ENCODE measurements at regions of chr18 and their contacts with region 1.

Region 1: DNA sequence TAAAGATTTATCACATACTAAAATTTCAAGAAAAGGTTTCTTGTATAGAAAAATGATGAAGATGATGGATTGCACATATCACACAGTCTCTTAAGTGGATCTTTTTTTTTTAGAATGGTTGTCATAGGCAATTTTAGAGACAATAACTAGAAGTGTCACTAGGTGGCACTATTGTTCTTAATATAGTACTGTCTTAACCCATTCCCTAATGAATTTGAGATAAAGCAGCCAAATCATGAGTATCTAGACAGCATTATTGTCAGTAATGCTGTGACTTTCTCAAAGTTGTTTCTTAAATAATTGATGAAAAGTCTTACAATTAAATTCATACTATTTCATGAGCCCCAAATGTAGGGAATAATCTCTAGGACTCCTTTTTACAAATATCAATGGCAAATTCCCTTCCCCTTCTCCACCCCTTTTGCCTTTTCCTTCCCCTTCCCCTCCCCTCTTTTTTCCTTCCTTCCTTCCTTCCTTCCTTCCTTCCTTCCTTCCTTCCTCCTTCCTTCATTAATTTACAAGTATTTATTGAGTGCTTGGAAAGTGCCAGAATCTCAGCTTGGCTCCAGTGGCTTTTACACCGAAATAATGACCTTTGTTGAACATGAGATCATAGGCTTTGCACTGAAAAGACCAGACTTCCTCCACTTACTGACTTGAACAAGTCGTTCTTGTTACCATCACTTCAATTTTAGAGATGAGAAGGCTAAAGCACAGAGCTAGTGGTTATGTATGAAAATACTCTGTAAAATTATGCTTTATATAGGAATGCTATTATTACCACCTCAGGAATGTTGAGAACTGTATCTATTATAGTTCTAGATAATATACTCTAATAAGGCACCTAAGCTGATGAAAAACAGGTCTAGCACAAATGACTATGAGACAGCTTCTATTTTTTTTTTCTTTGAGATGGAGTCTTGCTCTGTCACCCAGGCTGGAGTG is 19.8 kb downstream of the MYL12B start:
- DNase-seq: no peak
- ATAC-seq: peak; percentile 91

Region 2: GRCh38 chr18:3451183-3451988 is 169.7 kb after region 1 on chr18:
- intact Hi-C with region 1: loop called (anchors 5 kb)
- DNase-seq: peak; percentile 97
- ATAC-seq: peak; percentile 72

Region 3: GRCh38 chr18:3463051-3463450 is 181.3 kb after region 1 on chr18:
- intact Hi-C with region 1: loop called (anchors 5 kb)
- DNase-seq: no peak
- ATAC-seq: no peak

Region 4: DNA sequence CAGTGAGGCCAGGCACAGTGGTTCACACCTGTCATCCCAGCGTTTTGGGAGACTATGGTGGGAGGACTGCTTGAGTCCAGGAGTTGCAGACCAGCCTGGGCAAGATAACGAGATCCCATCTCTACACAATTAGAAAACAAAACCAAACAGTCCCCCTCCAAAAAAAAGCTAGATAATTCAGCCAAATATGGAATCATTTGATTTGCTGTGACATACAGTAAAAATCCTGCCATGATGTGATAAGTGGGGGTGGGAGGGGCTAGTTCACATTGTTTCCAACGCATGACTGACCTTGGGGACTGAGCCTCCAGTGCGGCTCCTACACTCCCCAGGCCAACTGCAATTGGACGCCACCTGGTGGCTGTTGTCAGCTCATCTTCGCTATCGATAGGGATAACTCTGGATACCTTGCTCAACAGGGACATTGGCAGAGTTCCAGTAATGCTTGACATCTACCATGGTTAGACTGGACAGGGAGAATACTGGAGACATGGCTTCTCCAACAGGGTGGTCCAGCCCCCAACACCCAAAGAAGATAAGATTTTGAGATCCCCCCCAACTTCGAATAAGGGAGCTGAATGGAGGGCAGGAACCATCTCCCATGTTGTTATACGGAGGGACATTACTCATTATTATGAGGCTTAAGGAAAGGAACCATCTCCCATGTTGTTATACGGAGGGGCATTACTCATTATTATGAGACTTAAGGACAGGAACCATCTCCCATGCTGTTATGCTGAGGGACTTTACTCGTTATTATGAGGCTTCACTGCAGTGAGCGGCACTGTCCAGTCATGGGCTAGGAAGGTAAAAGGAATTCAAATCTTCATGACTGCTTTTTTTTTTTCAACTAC is 304.2 kb after region 1 on chr18:
- intact Hi-C with region 1: loop called (anchors 2 kb)
- DNase-seq: peak; percentile 82
- ATAC-seq: peak; percentile 93

Region 5: GRCh38 chr18:3665780-3666525 is 384.2 kb after region 1 on chr18:
- intact Hi-C with region 1: loop called (anchors 2 kb)
- DNase-seq: peak; percentile 83
- ATAC-seq: peak; percentile 97

Measured in Right ventricle myocardium superior (tissue), 1 donor.